ENCODE measurements at regions of chr3 and their contacts with region 1.

Region 1: DNA sequence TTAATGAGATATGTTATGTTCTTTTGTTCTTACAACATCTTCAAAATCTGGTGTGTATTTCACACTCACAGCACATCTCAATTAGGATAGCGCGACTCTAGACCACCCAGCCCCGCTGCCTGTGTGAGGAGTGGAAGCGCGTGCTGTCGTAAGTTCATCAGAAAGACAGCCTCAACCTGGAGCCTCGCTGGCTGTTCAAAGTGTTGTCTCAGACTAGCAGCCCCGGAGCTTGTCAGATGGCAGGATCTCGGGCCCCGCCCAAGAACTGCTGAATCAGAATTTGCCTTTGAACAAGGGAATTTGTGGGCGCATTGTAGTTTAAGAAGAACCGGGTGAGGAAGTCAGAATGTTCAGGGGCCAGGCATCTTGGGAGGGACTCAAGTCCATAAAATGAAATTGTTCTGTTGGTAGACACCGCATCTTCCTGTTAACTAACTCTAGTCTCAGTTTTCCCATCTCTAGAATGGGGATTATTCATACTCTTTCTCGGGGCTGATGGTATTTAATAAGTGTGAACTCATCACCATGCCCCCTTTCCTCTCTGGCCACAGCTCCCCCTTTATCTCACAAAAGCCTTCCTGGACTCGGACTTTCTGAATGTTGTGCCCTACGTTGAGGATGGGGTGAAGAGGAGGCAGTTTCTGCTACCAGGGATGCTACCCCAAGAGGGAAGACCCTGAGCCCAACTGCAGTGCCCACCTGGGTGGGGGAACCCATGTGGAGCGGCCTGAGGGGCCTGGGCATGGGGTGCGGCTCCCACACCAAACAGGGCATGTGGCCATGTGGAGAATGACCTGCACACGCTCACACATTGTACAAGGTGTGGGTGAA is 40.4 kb downstream of the BHLHE40 start:
- DNase-seq: no peak
- ATAC-seq: no peak
- H3K4me3 ChIP-seq: no peak overlapping the region
- H3K27ac ChIP-seq: no peak overlapping the region
- H3K4me1 ChIP-seq: peaks cover 17 to 27% of the 10 kb centered on the region in 2 donors
- H3K27me3 ChIP-seq: no peaks in the 10 kb centered on the region
- CTCF ChIP-seq: no peak
- POLR2A ChIP-seq: no peak

Region 2: DNA sequence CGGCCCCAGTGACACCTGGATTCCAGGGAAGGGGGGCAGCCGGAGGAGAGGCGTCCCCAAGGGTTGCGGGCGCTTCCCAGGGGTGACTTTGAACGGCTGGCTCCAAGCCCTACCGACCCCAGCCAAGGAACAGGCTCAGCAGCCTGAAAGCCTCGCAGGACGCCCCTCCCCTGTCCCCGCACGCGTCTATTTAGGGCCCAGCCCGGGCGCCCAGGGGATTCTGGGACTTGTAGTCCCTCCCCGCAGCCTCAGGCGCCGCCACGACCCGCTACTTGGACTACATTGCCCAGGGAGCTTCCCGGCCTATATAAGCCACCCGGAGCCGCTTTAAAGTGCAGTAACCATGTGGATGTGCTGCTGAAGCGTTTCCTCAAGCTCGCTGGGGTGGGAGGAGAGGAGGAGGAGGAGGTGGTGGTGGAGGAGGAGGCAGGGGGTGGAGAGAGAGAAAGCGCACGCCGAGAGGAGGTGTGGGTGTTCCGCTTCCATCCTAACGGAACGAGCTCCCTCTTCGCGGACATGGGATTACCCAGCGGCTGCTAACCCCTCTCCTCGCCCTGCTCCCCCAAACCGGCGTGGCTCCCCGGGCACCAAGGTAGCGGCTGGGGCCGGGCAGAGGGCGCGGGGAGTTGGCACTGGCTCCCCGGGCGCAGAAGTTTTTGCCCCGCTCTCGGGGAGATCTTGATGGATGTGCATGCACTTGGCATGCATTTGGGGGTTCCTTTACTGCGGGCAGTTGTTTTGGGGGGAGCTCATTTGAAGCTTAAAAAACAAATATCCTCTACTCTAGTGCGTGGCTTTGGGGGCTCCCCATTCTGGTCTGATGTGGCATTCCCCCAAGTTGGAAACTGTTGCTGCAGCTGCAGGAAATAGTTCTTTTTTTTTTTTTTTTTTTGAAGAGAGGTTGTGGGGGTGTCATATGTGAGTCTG is 526.3 kb before region 1 on chr3 and contains the start of gene ITPR1:
- in situ Hi-C with region 1: no loop called
- intact Hi-C with region 1: no loop called
- DNase-seq: peak; percentile 96 to 97
- ATAC-seq: peak; percentile 93 to 94
- H3K4me3 ChIP-seq: peak within 1 kb of the TSS; percentile 78 to 97 (median 87)
- H3K27ac ChIP-seq: peak within 1 kb of the TSS; percentile 90 to 97 (median 92)
- H3K4me1 ChIP-seq: peaks cover 16 to 25% of the 10 kb centered on the region in 2 donors
- H3K27me3 ChIP-seq: no peaks in the 10 kb centered on the region
- CTCF ChIP-seq: no peak
- POLR2A ChIP-seq: peak; percentile 95 to 99
- total RNA-seq, gene ITPR1: 5.5 to 21.7 (median 11.3) TPM

Region 3: DNA sequence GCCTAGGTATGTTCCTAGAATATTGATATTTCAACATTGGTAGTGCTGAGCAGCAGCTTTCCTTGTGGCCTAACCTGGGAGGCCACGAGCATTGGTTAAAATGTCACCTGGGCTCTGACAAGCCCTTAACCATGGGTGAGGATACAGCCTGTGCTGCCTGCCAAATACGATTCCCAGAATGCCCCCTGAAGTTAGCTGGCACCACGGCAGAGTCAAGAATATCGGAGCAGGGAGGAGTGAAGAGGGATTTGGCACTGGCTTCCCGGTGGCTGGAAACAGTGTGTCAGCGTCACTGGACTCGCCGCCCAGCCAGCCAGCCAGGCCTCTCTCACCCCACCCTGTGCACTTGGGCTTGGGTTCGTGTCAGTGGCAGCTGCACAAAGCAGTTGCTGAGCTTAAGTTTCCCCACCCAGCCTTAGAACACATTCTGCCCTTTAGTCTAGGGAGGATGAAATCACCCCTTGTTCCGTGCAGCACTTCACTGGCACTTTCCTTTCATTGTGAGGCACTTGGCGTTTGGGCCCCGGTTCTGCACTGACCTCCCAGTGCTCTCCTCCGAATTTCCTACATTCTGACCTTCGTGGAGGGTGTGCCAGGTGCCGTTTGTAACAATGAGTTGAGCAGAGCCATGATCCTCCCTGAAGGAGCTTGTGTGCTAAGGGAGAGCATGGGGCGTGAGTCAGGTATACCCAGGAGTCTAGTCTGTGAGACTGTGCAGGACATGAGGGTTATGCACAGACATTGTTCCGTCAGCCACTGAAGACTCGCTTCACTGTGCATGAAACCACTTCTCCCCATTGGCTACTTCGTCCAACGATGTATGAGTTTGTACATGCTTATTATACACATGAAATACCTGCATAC is 193.2 kb before region 1 on chr3:
- in situ Hi-C with region 1: no loop called
- intact Hi-C with region 1: no loop called
- DNase-seq: peak; percentile 75 to 90
- ATAC-seq: peak; percentile 72 to 74
- H3K4me3 ChIP-seq: peak overlapping the region; percentile 12 to 36 (median 23)
- H3K27ac ChIP-seq: peak overlapping the region; percentile 80 to 89 (median 86)
- H3K4me1 ChIP-seq: peaks cover 48 to 67% of the 10 kb centered on the region in 2 donors
- H3K27me3 ChIP-seq: no peaks in the 10 kb centered on the region
- CTCF ChIP-seq: no peak
- POLR2A ChIP-seq: peak; percentile 67 to 83

Region 4: DNA sequence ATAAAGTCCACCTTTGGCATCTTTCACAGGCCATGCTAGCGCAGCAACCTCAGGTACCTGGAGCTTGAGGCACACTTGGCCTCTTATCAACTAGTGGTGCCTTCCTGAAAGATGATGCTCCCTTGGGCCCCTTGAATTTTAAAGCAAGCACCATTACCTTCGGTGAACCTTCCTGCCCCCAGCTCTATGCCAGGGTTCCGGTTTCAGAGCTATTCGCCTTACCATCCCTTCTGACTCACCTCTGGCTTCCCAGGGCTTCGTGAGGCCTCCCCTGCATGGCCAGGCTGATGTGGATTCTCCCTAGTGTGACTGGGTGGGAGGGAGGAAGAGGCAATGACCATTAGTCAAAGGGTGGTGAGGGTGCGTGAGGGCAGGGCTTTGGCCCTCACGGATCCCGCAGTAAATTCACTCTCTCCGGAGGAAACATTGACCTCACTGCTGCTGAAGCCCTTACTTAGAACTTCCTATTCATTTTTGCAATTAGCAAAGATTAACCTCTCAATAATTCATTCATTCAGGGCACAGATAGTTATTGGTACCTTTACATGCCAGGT is 24.0 kb before region 1 on chr3:
- in situ Hi-C with region 1: no loop called
- intact Hi-C with region 1: loop called (anchors 1 kb)
- DNase-seq: peak; percentile 50 to 88
- ATAC-seq: peak; percentile 78 to 85
- H3K4me3 ChIP-seq: no peak overlapping the region
- H3K27ac ChIP-seq: peak overlapping the region; percentile 96 to 100 (median 99)
- H3K4me1 ChIP-seq: peaks cover 14 to 30% of the 10 kb centered on the region in 2 donors
- H3K27me3 ChIP-seq: no peaks in the 10 kb centered on the region
- CTCF ChIP-seq: no peak
- POLR2A ChIP-seq: peak in 1 of 2 donors; percentile 16

Measured in gastrocnemius medialis (tissue), 4 donors.